Naive thymus-derived CD8-positive, alpha-beta T cell (primary cell): ENCODE measurements at regions of chr17 and their contacts with region 1.

Region 1: DNA sequence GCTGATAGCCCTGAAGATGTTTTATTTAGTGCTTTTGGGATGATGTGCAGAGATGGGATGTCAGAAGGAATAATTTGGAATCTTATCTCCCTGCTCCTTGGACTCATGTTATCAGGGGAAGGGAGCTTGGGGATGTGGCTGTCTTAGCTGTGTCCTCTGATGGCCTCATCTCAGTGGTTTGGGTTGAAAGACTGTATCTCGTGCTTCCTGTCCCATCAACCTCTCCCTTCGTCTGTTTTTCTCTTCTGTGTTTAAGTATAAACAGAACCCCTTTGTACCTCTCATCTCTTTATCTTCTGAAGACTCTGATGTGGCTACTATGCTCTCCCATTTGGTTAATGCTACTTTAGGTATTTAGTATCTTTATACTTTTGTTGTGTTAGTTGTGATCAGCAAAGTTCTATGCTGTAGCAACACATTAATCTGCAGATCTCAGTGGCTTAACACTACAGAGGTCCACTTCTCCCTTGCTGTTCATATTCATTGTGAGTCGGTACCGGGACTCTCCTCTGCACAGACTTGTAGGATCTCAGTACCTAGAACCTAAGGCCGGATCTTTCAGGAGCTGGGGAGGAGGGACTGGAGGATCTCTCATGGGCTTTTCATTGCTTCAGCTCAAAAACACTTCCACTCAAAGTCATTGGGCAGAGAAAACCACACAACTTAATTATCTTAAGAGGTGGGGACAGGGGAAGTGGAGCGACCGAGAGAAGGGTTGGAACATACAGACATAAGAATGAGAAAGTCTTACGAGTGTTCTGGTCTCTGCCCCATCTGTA is 28.8 kb downstream of the PRKCA start:
- DNase-seq: peak in 9 of 10 donors; percentile 5 to 86 (median 60)
- ATAC-seq: peak; percentile 85 to 88
- H3K4me3 Mint-ChIP-seq: peak overlapping the region; percentile 69 to 89 (median 84)
- H3K27ac Mint-ChIP-seq: peak overlapping the region; percentile 92 to 99 (median 98)
- H3K4me1 Mint-ChIP-seq: peaks cover 45 to 80% (median 78%) of the 10 kb centered on the region in 4 donors
- H3K27me3 Mint-ChIP-seq: no peaks in the 10 kb centered on the region

Region 2: DNA sequence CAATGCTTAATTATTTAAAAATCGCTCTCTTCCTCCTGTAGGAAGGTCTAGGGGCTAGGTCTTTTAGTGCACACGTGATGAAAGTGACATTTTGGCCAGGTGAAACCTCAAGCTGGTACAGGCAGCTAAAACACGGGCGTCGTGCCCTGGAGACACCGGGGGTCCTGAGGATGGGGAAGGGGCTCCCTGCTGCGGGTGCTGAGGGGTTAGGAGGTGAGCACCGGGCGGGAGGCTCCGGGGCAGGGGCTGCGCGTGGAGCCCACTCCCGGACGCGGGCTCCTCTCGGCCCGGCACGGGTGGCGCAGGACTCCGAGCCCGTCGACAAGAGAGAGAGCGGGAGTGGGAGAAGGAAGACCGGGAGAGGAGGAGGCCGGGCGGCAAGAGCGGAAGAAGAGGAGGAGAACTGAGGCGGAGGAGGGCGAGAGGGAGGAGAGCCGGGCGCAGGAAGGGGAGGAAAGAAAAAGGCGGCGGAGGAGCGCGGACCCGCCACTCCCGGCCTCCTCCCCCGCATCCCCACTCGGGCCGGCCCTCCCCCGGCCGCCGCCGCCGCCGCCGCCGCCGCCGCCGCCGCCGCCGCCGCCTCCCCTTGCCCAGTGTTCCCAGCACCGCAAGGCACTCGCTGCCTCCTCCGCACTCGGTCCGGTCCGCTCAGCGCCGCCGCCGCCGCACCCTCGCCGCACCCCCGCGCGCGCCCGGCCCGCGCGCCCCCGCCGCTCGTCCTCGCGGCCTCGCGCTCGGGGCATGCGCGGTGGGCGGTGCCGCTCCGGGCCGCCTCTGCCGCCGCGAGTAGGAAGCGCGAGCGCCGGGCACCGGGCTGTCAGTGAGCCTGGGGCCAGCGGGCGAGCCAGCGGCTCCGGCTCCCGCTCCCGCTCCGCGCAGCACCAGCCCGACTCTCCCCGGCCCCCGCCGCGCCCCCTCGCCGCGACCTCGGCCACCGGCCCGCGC is 29.2 kb before region 1 on chr17 and contains the start of gene PRKCA:
- POLR2A ChIA-PET with region 1: interaction called, 46 read pairs
- DNase-seq: peak; percentile 57 to 80 (median 73)
- ATAC-seq: peak; percentile 75 to 76
- H3K4me3 Mint-ChIP-seq: peak within 1 kb of the TSS; percentile 96 to 100 (median 96)
- H3K27ac Mint-ChIP-seq: peak within 1 kb of the TSS; percentile 90 to 98 (median 94)
- H3K4me1 Mint-ChIP-seq: peaks cover 33 to 69% (median 54%) of the 10 kb centered on the region in 4 donors
- H3K27me3 Mint-ChIP-seq: peaks cover 0 to 1% (median 0%) of the 10 kb centered on the region in 5 donors
- polyA plus RNA-seq, gene PRKCA: 1.3 to 5.8 (median 3.3) TPM